Activated naive CD4-positive, alpha-beta T cell treated with anti-CD3 and anti-CD28 coated beads for 36 hours (primary cell): ENCODE measurements at regions of chr13 and their contacts with region 1.

Region 1: GRCh38 chr13:108269601-108270328 is at the start of gene TNFSF13B:
- DNase-seq: peak; percentile 68
- H3K4me3 Mint-ChIP-seq: peak within 1 kb of the TSS; percentile 75
- H3K27ac Mint-ChIP-seq: peak within 1 kb of the TSS; percentile 81
- H3K4me1 Mint-ChIP-seq: peaks cover 55% of the 10 kb centered on the region
- H3K27me3 Mint-ChIP-seq: no peaks in the 10 kb centered on the region
- total RNA-seq, gene TNFSF13B: 2.0 to 2.6 TPM

Region 2: DNA sequence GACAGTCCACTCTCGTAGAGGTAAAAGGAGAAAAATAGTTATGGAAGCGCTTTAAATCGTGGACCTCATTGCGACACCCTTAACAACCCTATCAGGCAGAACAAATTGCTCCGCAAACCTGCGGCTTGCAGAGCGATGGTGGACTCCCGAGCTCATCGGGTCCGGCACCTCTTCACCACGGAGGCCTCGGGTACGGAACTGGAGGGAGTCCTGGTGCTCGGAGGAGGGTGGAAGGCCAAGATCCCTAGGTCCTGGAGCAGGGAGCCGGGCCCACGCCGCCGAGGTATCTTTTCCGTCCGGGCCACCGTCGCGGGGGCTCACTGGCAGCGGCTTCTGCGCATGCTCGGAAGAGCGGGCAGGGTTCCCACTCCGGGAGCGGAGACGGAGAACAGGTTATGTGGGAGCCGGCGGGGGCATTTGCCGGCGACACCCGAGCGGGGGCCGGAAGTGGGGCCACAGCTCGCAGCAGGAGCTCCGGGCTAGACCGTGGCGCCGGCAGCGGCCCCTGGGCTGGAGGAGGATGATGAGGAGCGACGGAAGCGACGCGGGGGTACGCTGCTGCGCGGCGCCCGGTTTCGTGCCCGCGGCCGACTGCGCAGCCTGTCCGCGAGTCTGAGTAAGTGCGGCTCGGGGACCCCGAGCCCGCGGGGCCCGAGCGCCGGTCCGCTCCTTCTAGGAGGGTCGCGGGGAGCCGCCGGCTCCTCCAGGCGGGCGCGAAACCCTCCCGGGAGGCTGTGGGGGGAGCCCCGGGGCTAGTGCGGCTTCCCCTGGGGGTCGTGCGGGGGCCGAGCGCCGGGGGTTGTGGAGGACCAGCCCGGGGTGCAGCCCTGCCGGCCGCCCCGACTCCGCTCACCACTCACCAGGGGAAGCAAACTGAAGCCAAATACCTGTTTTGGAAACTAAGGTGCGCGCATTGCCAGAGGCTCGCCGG is 51.5 kb before region 1 on chr13 and contains the start of gene ABHD13:
- CTCF ChIA-PET with region 1: interaction called, 5 read pairs
- intact Hi-C with region 1: loop called (anchors 1 kb)
- DNase-seq: peak; percentile 87
- H3K4me3 Mint-ChIP-seq: peak within 1 kb of the TSS; percentile 90
- H3K27ac Mint-ChIP-seq: peak within 1 kb of the TSS; percentile 94
- H3K4me1 Mint-ChIP-seq: peaks cover 48% of the 10 kb centered on the region
- H3K27me3 Mint-ChIP-seq: no peaks in the 10 kb centered on the region
- total RNA-seq, gene ABHD13: 3.4 to 3.8 TPM

Region 3: GRCh38 chr13:108305655-108306054 is 35.9 kb after region 1 on chr13:
- CTCF ChIA-PET with region 1: interaction called, 7 read pairs
- intact Hi-C with region 1: loop called (anchors 2 kb)
- DNase-seq: no peak
- H3K4me3 Mint-ChIP-seq: no peak overlapping the region
- H3K27ac Mint-ChIP-seq: no peak overlapping the region
- H3K4me1 Mint-ChIP-seq: peaks cover 9% of the 10 kb centered on the region
- H3K27me3 Mint-ChIP-seq: no peaks in the 10 kb centered on the region

Region 4: GRCh38 chr13:108915634-108916512 is 646.1 kb after region 1 on chr13:
- CTCF ChIA-PET with region 1: no interaction called
- intact Hi-C with region 1: loop called (anchors 1 kb)
- DNase-seq: peak; percentile 98
- H3K4me3 Mint-ChIP-seq: peak overlapping the region; percentile 68
- H3K27ac Mint-ChIP-seq: peak overlapping the region; percentile 87
- H3K4me1 Mint-ChIP-seq: peaks cover 20% of the 10 kb centered on the region
- H3K27me3 Mint-ChIP-seq: peaks cover 8% of the 10 kb centered on the region